BJ (cell line): ENCODE measurements at regions of chr4 and their contacts with region 1.

Region 1: DNA sequence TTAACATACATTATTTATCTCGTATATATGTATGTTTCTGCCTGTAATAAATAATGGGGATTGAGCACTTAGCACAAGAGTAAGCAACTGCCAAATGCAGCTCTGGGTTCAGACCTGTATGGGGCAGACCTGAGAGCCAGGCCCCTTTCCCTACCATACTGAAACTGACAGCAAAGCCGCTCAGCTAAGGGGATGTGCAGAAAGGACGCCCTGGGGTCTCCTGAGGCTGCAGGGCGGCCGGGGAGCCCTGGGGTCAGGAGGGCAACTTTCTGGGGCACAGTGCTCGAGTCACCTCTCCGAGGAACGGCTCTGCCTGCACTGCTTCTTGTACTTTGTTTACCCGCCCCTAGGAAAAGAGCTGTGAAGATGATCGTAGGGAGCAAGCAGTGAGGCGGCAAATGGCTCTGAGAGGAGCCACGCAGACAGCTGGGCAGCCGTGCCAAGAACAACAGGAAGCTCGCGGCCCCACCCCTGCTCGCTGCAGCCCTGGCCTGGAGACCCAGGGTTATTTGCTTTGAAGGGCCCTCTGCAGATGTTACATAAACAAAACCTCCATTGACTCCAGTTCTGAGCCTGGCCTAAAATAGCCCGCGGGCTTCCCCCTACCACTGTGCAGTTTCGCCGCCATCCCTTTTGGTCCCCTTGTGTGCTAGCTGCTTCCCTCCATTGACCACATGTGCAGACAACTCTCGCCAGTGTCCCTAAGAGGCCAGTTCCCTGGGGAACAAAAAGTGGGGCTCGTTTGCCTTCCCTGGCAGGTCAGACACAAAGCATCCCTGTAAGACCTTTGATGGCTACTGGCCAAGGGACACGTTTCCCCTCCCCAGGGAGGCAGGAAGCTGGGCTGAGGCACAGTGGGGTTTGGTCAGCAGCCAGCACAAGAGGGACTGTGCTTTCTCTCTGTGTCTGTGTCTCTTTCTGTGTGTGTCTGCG is 111.3 kb upstream of the LNX1 start:
- DNase-seq: peak; percentile 29
- H3K4me3 ChIP-seq: no peak overlapping the region
- H3K27me3 ChIP-seq: no peaks in the 10 kb centered on the region
- CTCF ChIP-seq: peak; percentile 37

Region 2: DNA sequence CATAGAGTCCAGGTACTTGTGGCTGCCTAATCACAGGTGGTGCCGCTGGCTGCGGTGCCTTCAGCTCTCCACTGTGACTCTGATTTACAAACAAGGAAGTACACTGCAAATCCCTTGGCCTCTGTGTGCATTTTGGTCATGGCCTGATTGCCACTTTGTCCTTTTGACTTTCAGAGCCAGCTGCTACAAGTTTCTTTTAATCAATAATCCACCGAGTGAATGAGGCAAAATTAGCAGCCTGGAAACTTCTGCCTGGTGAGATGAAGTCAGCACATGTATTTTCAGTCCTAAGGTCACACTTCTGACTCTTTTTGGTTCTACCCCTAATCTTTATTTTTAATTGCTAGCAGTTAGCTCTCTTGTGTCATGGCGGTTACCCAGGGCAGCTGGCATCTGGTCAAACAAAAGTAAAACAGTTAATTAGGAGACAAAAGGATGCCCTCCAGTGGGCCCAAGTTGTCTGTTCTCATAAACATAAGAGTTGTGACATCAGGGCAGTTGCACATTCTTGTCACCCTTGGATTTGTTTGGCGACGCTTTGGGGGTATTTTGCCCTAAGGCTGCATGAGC is 49.0 kb before region 1 on chr4:
- CTCF ChIA-PET with region 1: interaction called, 11 read pairs
- POLR2A ChIA-PET with region 1: no interaction called
- DNase-seq: no peak
- H3K4me3 ChIP-seq: no peak overlapping the region
- H3K27me3 ChIP-seq: no peaks in the 10 kb centered on the region
- CTCF ChIP-seq: no peak

Region 3: GRCh38 chr4:53717064-53717549 is 14.5 kb after region 1 on chr4:
- CTCF ChIA-PET with region 1: interaction called, 21 read pairs
- POLR2A ChIA-PET with region 1: no interaction called
- DNase-seq: no peak
- H3K4me3 ChIP-seq: no peak overlapping the region
- H3K27me3 ChIP-seq: no peaks in the 10 kb centered on the region
- CTCF ChIP-seq: no peak

Region 4: DNA sequence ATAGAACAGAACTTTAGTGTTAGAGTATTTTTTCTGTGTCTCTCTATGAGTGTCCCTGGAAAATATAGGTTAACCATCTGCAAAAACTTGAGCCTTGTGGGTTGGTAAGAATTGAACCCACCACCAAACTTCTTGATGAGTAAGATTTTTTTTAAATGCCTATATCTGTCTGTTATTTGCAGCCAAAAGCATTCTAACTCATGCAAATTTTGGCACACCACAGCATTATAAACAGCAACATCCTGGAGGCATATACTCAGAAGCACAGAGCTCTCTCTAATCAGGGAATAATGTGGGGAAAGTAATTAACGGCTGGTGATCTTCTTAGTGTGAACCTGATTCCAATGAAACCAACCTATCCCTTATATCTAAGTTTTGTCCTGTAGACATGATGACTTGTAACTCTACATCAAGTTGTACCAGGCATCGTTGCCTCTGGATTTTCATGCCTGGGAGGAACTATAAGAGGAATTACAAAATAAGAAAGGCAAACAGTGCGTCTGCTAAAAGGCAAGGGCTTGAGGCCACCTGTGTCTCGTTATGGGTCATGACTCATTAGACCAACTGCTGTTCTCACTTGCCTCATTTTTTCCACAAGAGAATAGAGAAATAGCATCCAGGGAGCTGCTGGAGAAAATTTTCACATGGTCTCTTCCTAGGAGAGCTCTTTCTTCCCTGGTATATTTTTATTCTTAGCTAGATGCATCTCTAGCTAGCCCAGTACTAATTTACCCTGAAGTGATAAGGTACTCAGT is 159.4 kb after region 1 on chr4:
- CTCF ChIA-PET with region 1: interaction called, 10 read pairs
- POLR2A ChIA-PET with region 1: no interaction called
- DNase-seq: peak; percentile 93
- H3K4me3 ChIP-seq: no peak overlapping the region
- H3K27me3 ChIP-seq: no peaks in the 10 kb centered on the region
- CTCF ChIP-seq: no peak

Region 5: DNA sequence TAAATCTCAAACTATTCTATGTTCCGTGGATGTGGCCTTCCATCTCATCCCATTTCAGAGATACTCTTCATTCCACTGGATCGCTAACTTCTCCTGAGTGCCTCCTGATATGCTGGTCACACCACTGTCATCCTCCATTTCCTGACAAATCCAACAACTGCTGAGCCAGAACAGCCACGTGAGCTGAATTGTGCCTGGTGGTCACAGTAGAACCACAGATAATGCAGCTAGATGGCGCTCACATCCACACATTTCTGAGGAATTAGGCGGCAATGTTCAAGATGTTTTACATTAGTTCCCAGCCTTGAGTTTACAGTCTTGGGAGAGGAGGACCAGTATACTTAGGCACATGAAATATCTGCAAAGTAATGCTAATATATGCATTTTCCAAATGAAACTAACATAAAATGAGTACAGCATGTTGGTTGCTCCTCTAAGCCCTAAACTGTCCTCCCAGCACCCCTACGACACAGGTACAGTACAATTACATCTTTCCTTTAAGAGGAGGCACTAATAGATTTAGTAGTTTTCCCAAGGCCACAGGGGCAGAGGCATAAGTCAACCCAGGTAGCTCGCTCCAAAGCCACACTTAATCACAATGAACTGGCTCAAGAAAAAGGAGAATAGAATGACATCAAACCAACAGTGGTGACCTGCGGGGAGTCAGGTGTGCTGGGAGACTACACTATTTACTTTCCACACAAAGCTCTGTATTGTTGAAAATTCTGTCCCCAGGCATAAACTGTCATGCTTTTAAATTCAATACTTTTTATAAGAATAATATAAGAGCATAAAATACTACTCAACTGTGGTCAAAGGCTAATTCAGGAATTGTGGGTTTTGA is 227.6 kb after region 1 on chr4:
- CTCF ChIA-PET with region 1: interaction called, 10 read pairs
- POLR2A ChIA-PET with region 1: no interaction called
- DNase-seq: peak; percentile 52
- H3K4me3 ChIP-seq: no peak overlapping the region
- H3K27me3 ChIP-seq: no peaks in the 10 kb centered on the region
- CTCF ChIP-seq: peak; percentile 73